Activated T-helper 1 cell treated with anti-CD3 and anti-CD28 coated beads, Interleukin-12 subunit alpha, Interleukin-12 subunit beta, Interleukin-2, Interleukin-4 antibody, amounts not matched to agents 30 ng/mL and 10 ng/mL and 1 ng/mL, durations not matched to agents 14 hours and 24 hours and 36 hours (primary cell): ENCODE measurements at regions of chr1 and their contacts with region 1.

Region 1: GRCh38 chr1:165697881-165698760 is at the start of gene ALDH9A1:
- DNase-seq: peak; percentile 82
- H3K4me3 Mint-ChIP-seq: peak within 1 kb of the TSS; percentile 95
- H3K27ac Mint-ChIP-seq: peak within 1 kb of the TSS; percentile 97
- H3K4me1 Mint-ChIP-seq: peaks cover 20% of the 10 kb centered on the region
- H3K27me3 Mint-ChIP-seq: peaks cover 2% of the 10 kb centered on the region
- total RNA-seq, gene ALDH9A1: 41.7 and 42.8 TPM in 2 replicates

Region 2: DNA sequence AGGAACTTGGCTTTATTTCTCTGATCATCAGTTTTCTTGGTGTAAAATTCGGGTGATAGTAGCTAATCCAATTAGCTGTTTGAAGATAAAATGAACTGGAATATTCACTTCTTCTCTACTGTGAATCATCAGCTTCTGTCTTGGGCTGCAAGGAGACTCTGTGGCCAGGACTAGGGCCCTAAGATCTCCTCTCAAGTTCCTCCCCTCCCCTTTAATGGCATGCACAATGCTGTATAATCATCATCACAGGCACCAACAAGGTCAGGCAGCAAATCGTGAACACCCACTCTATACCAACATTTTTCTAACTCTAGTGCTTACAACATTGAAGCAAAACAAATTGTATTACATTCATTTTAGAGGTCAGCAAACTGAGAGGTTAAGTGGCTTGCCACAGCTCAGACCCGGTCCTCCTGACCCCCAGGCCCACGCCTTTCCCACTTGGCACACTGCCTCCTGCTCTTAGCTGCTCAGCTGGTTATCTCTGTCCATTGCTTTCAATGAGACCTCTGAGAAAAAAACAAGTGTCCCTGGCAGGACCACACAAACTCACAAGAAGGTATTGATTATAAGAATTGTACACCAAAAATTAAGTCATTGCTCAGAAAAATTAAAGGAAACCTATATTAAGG is 122.5 kb before region 1 on chr1:
- intact Hi-C with region 1: no loop called
- DNase-seq: no peak
- H3K4me3 Mint-ChIP-seq: no peak overlapping the region
- H3K27ac Mint-ChIP-seq: no peak overlapping the region
- H3K4me1 Mint-ChIP-seq: no peaks in the 10 kb centered on the region
- H3K27me3 Mint-ChIP-seq: peaks cover 30% of the 10 kb centered on the region

Region 3: GRCh38 chr1:165630629-165631341 is 67.3 kb before region 1 on chr1 and contains the start of gene MGST3:
- intact Hi-C with region 1: loop called (anchors 1 kb)
- DNase-seq: peak; percentile 92
- H3K4me3 Mint-ChIP-seq: no peak within 1 kb of the TSS
- H3K27ac Mint-ChIP-seq: no peak within 1 kb of the TSS
- H3K4me1 Mint-ChIP-seq: peaks cover 13% of the 10 kb centered on the region
- H3K27me3 Mint-ChIP-seq: peaks cover 9% of the 10 kb centered on the region
- total RNA-seq, gene MGST3: 23.3 and 25.1 TPM in 2 replicates

Region 4: GRCh38 chr1:165827268-165828102 is 129.4 kb after region 1 on chr1 and contains the start of gene UCK2:
- intact Hi-C with region 1: loop called (anchors 1 kb)
- DNase-seq: peak; percentile 51
- H3K4me3 Mint-ChIP-seq: peak within 1 kb of the TSS; percentile 96
- H3K27ac Mint-ChIP-seq: peak within 1 kb of the TSS; percentile 90
- H3K4me1 Mint-ChIP-seq: peaks cover 22% of the 10 kb centered on the region
- H3K27me3 Mint-ChIP-seq: peaks cover 15% of the 10 kb centered on the region
- total RNA-seq, gene UCK2: 109 and 112 TPM in 2 replicates

Region 5: GRCh38 chr1:166083887-166084286 is 385.8 kb after region 1 on chr1:
- intact Hi-C with region 1: loop called (anchors 5 kb)
- DNase-seq: no peak
- H3K4me3 Mint-ChIP-seq: no peak overlapping the region
- H3K27ac Mint-ChIP-seq: no peak overlapping the region
- H3K4me1 Mint-ChIP-seq: peaks cover 22% of the 10 kb centered on the region
- H3K27me3 Mint-ChIP-seq: no peaks in the 10 kb centered on the region